Endothelial cell of umbilical vein (primary cell): ENCODE measurements at regions of chr17 and their contacts with region 1.

Region 1: GRCh38 chr17:35432176-35433074 is at the start of gene SLFN12:
- DNase-seq: peak; percentile 96
- H3K4me3 ChIP-seq: peak within 1 kb of the TSS; percentile 55 to 92 (median 82)
- H3K27ac ChIP-seq: peak within 1 kb of the TSS; percentile 96
- H3K4me1 ChIP-seq: peaks cover 23% of the 10 kb centered on the region
- H3K27me3 ChIP-seq: no peaks in the 10 kb centered on the region
- CTCF ChIP-seq: no peak
- POLR2A ChIP-seq: peak; percentile 92
- total RNA-seq, gene SLFN12: 29.9 and 42.6 TPM in 2 replicates

Region 2: GRCh38 chr17:34254651-34255380 is 1177.6 kb before region 1 on chr17 and contains the start of gene CCL2:
- CTCF ChIA-PET with region 1: no interaction called
- POLR2A ChIA-PET with region 1: no interaction called
- dilution Hi-C with region 1: no loop called
- intact Hi-C with region 1: loop called (anchors 5 kb)
- DNase-seq: peak; percentile 92
- H3K4me3 ChIP-seq: peak within 1 kb of the TSS in 2 of 3 experiments; percentile 43 to 46
- H3K27ac ChIP-seq: peak within 1 kb of the TSS; percentile 96
- H3K4me1 ChIP-seq: peaks cover 78% of the 10 kb centered on the region
- H3K27me3 ChIP-seq: no peaks in the 10 kb centered on the region
- CTCF ChIP-seq: no peak
- POLR2A ChIP-seq: no peak
- total RNA-seq, gene CCL2: 160 and 238 TPM in 2 replicates

Region 3: GRCh38 chr17:35254107-35254802 is 178.2 kb before region 1 on chr17:
- CTCF ChIA-PET with region 1: no interaction called
- POLR2A ChIA-PET with region 1: interaction called, 3 read pairs
- dilution Hi-C with region 1: no loop called
- intact Hi-C with region 1: loop called (anchors 1 kb)
- DNase-seq: peak; percentile 98
- H3K4me3 ChIP-seq: no peak overlapping the region
- H3K27ac ChIP-seq: peak overlapping the region; percentile 59
- H3K4me1 ChIP-seq: peaks cover 35% of the 10 kb centered on the region
- H3K27me3 ChIP-seq: no peaks in the 10 kb centered on the region
- CTCF ChIP-seq: no peak
- POLR2A ChIP-seq: no peak

Region 4: GRCh38 chr17:35345926-35346771 is 86.3 kb before region 1 on chr17:
- CTCF ChIA-PET with region 1: no interaction called
- POLR2A ChIA-PET with region 1: no interaction called
- dilution Hi-C with region 1: no loop called
- intact Hi-C with region 1: loop called (anchors 2 kb)
- DNase-seq: peak; percentile 45
- H3K4me3 ChIP-seq: peak overlapping the region in 2 of 3 experiments; percentile 13 to 46
- H3K27ac ChIP-seq: no peak overlapping the region
- H3K4me1 ChIP-seq: peaks cover 10% of the 10 kb centered on the region
- H3K27me3 ChIP-seq: peaks cover 3 to 8% of the 10 kb centered on the region in 2 experiments
- CTCF ChIP-seq: no peak
- POLR2A ChIP-seq: no peak

Region 5: DNA sequence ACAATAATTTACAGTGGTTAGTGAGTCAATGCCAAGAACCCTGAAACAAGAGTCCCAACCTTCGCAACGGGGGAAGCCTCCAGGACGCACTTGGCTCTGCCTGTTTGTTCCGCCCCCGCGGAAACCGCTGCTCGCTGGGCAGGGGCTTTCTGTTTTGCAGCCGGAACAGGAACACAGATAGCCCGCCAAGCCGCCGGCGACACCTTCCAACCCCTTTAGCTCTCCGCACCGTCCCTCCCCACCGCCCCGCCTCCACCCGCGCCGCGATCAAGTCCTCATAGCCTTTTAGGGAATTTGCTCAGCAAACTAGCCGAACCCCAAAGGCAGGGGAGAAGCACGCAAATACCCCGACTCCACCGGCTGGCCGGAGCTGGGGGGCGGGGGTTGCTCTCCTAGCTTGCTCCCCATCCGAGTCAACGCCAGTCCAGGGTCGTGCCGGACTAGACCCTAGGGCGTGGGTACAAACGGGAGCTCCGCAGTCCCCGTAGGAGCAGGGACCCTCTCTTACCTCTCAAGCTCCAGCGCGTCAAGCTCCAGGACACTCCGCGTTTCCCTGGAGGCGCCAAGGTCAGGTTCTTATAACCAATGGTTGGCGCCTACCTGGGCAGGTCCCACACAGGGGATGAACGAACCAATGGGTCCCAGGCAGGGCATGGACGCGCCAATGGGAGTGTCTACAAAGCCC is 15.9 kb after region 1 on chr17 and contains the start of gene SLFN13:
- CTCF ChIA-PET with region 1: interaction called, 5 read pairs
- POLR2A ChIA-PET with region 1: no interaction called
- dilution Hi-C with region 1: no loop called
- intact Hi-C with region 1: loop called (anchors 1 kb)
- DNase-seq: peak; percentile 51
- H3K4me3 ChIP-seq: peak within 1 kb of the TSS; percentile 39 to 61 (median 53)
- H3K27ac ChIP-seq: no peak within 1 kb of the TSS
- H3K4me1 ChIP-seq: peaks cover 6% of the 10 kb centered on the region
- H3K27me3 ChIP-seq: peaks cover 18 to 37% of the 10 kb centered on the region in 2 experiments
- CTCF ChIP-seq: no peak
- POLR2A ChIP-seq: no peak
- total RNA-seq, gene SLFN13: 13.7 and 24.7 TPM in 2 replicates

Region 6: GRCh38 chr17:35568541-35568940 is 136.1 kb after region 1 on chr17:
- CTCF ChIA-PET with region 1: no interaction called
- POLR2A ChIA-PET with region 1: no interaction called
- dilution Hi-C with region 1: no loop called
- intact Hi-C with region 1: loop called (anchors 1 kb)
- DNase-seq: peak; percentile 54
- H3K4me3 ChIP-seq: peak overlapping the region; percentile 72 to 94 (median 72)
- H3K27ac ChIP-seq: peak overlapping the region; percentile 83
- H3K4me1 ChIP-seq: peaks cover 10% of the 10 kb centered on the region
- H3K27me3 ChIP-seq: peaks cover 7 to 12% of the 10 kb centered on the region in 2 experiments
- CTCF ChIP-seq: no peak
- POLR2A ChIP-seq: no peak

Region 7: GRCh38 chr17:35808962-35809854 is 376.8 kb after region 1 on chr17 and contains the start of gene TAF15:
- CTCF ChIA-PET with region 1: no interaction called
- POLR2A ChIA-PET with region 1: no interaction called
- dilution Hi-C with region 1: no loop called
- intact Hi-C with region 1: loop called (anchors 5 kb)
- DNase-seq: peak; percentile 98
- H3K4me3 ChIP-seq: peak within 1 kb of the TSS; percentile 56 to 96 (median 81)
- H3K27ac ChIP-seq: peak within 1 kb of the TSS; percentile 90
- H3K4me1 ChIP-seq: peaks cover 35% of the 10 kb centered on the region
- H3K27me3 ChIP-seq: no peaks in the 10 kb centered on the region
- CTCF ChIP-seq: peak; percentile 77 to 85
- POLR2A ChIP-seq: peak; percentile 98
- total RNA-seq, gene TAF15: 244 and 247 TPM in 2 replicates